Right cardiac atrium (tissue), 5 donors: ENCODE measurements at regions of chr3 and their contacts with region 1.

Region 1: DNA sequence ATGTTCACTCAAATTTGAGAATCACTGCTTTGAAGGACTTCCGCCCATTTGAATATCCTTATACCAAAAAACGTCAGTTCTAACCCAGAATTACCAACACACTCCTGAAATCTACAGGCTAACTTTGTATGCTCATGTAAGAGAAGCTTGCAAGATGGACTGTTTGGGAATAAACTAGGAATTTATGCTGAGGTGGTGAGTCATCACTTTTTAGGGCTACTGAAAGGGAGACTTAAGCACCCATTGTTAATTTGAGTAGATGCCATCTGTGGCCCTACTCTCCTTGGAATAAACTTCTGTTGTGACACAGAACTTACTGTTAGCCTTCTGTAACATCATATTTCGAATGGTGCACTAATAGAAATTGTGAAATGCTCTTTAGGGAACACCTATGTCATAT is 74.6 kb downstream of the FGF12 start:
- DNase-seq: no peak
- ATAC-seq: no peak
- H3K4me3 ChIP-seq: no peak overlapping the region
- H3K27ac ChIP-seq: peak overlapping the region; percentile 77
- H3K4me1 ChIP-seq: no peaks in the 10 kb centered on the region
- H3K27me3 ChIP-seq: no peaks in the 10 kb centered on the region

Region 2: DNA sequence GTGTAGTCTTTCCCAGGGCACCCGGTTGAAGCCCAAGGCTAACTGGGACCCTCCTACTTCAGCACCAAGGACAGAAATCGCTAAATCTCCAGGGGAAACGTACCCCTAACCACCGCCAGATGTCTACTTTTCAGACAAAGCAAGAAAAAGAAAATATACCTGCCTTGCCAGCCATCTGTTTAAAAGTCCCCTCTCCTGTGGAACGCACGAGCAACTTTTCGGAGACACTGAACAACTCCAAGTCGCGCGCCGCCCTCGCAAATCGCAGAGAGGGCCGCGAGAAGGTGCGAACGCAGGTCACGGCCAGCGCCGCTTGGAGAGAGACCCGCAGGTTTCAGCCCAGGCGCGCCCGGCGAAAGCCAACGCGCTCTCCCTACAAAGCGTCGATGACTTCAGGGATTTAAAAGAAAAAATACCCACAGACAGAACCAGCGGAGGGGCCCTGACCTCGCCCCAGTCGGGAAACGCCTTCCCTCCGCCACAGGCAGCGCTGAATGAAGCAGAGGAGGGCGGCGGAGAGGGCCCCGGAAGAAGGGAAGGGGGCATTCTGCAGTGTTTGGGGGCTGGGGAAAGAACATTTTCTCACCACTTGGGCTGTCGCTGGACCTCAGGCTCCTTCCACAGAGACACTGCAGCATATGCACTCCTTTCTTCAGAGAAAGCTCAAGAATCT is 138.5 kb before region 1 on chr3:
- intact Hi-C with region 1: no loop called
- DNase-seq: no peak
- ATAC-seq: peak in 1 of 2 donors; percentile 17
- H3K4me3 ChIP-seq: peak overlapping the region; percentile 51
- H3K27ac ChIP-seq: no peak overlapping the region
- H3K4me1 ChIP-seq: peaks cover 6% of the 10 kb centered on the region
- H3K27me3 ChIP-seq: no peaks in the 10 kb centered on the region

Region 3: DNA sequence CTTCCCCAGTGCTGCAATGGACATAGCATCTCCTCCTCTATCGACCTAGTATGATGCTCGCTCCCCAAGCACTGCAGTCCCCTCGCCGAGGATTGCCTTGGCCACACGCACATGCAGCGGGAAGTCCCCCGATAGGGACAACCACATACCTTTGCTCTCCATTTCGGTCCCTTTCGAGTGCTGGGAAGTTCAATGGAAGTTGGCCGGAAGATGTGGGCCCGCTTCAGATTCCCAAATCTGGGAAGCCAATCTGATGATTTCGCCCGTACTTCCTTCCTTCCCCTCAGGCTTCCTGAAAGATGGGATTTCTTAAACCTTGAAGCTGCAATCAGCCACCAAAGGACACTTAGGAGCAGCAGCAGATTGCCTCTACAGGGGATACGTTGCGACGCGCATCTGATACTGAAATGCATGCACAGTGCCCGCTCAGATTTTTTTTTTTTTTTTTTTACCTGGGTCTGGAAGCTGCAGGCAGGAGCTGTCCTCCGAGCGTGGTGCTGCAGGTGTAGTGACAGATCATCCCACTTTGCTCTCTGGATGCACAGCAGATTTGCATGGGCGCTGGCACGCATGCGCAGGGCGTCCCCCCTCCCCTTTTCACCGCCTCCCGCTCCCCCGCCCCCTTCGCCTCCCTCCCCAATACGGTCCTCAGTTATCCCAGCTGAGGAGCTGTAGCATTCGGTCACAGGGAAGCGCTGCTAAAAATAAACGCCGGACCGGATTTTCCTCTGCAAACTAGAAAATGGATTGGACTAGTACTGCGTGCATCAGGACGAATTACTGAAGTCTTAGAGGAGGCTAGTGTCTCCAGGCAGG is 74.5 kb after region 1 on chr3 and contains the start of gene FGF12:
- intact Hi-C with region 1: loop called in 1 of 4 experiments (anchors 10 kb)
- DNase-seq: peak; percentile 84 to 94 (median 93)
- ATAC-seq: peak; percentile 94 to 95
- H3K4me3 ChIP-seq: peak within 1 kb of the TSS; percentile 70
- H3K27ac ChIP-seq: peak within 1 kb of the TSS; percentile 43
- H3K4me1 ChIP-seq: peaks cover 2% of the 10 kb centered on the region
- H3K27me3 ChIP-seq: no peaks in the 10 kb centered on the region
- total RNA-seq, gene FGF12: 315 to 354 (median 333) TPM

Region 4: GRCh38 chr3:192758654-192759053 is 105.9 kb after region 1 on chr3:
- intact Hi-C with region 1: no loop called
- DNase-seq: peak in 1 of 3 donors; percentile 53
- ATAC-seq: no peak
- H3K4me3 ChIP-seq: no peak overlapping the region
- H3K27ac ChIP-seq: no peak overlapping the region
- H3K4me1 ChIP-seq: no peaks in the 10 kb centered on the region
- H3K27me3 ChIP-seq: no peaks in the 10 kb centered on the region

Region 5: DNA sequence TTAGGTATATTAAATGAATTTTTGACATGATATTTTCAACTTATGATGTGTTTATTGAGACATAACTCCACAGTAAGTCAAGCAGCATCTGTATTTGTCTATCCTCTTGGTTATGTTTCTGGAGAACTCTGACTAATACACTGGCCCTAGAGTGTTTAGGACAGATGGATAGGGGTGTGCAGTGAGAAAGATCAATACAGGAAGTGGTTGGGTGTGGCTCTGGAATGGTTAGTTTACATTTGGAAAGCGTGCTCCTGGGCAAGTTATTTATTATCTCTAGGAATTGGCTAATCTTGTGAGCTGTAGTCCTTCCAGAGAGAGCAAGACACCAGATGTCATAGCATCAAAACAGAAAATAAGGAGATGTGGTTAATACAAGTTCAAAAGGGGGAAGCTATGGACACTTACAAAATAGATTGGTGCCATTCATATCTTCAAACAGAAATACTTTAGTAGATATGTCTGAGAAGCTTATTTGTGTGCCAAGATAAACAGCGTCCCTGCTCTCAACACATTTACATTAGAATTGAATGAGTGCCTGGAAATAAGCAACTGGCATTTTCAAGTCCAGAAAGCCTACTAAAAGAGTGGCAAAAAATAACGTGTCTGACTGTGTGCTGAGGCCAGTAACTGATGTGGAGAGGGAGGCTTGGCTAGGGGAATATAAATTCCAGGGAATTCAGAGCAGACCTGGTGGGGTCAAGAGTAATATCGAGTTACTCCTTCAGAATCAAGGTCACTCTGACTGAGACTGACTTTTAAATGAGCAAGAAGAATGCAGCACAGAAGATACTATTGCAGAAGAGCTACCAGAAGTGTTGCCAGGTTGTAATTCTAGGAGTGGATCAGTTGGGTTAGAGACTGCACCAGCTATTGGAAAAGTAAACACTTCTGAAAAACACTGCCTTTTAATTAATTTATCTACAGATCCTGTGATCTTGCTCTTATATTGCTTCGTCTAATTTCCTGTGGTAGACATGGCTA is 554.9 kb after region 1 on chr3:
- intact Hi-C with region 1: no loop called
- DNase-seq: no peak
- ATAC-seq: no peak
- H3K4me3 ChIP-seq: no peak overlapping the region
- H3K27ac ChIP-seq: no peak overlapping the region
- H3K4me1 ChIP-seq: no peaks in the 10 kb centered on the region
- H3K27me3 ChIP-seq: no peaks in the 10 kb centered on the region